Activated CD4-positive, alpha-beta T cell treated with anti-CD3 and anti-CD28 coated beads for 36 hours (primary cell): ENCODE measurements at regions of chr17 and their contacts with region 1.

Region 1: DNA sequence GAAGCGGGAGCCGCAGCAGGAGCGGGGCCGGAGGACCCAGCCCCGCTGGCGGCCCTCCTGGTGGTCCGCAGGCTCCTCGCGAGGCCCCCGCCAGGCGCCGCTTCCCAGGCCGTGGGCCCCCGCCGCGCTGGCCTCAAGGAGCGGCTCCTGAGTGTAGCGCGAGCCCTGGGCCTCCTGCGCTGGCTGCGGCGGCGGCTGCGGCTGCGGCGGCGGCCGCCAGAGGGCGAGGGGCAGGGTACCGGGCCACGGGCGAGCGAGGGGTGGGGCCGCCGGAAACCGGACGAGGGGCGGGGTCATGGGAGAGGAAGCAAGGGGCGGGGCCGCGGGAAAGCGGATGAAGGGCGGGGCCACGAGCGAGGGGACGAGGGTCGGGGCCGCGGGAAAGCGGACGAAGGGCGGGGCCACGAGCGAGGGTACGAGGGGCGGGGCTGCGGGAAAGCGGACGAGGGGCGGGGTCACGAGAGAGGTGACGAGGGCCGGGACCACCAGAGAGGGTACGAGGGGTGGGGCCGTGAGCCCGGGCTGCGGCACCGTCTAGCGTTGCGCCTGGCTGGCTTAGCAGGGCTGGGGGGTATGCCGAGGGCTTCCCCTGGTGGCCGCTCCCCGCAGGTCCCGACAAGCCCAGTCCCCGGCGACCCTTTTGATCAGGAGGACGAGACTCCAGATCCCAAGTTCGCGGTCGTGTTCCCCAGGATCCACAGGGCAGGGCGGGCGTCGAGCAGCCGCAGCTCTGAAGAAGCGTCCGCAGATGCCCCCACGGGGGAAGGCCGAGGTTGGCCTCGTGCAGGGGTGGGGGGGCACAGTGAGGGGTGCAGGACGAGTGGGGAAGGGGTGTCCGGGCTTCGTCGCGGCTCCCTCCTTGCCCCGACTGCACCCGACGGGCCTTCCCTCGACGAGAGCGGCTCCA is 1.7 kb downstream of the MYO15B start:
- DNase-seq: peak; percentile 99
- ATAC-seq: peak; percentile 90
- H3K4me3 Mint-ChIP-seq: peak overlapping the region; percentile 72
- H3K27ac Mint-ChIP-seq: peak overlapping the region; percentile 42
- H3K4me1 Mint-ChIP-seq: no peaks in the 10 kb centered on the region
- H3K27me3 Mint-ChIP-seq: peaks cover 2% of the 10 kb centered on the region

Region 2: DNA sequence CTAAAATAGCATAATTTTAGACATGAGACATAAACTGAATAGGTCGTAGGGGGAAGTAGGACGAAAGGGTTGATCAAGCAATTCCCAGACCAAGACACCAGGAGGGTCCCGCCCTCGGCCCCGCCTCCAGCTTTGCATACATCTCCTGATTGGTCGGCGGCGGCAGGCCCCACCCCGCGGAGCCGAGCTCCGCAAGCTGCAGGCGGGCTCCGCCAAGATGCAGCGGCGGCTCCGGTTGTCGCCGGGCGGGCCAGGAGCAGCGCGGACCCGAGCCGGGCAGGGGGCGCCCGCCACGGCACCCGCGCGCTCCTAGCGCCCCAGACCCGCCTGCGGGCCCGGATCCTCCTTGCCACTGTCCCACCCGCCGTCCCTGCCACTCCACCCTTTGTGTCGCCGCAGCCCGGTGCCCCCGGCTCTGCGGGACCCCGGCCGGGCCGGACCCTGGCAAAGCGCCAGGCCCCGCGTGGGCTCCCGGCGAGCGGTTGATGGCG is 601.8 kb before region 1 on chr17 and contains the start of gene CDR2L:
- CTCF ChIA-PET with region 1: no interaction called
- POLR2A ChIA-PET with region 1: no interaction called
- intact Hi-C with region 1: loop called in 1 of 2 experiments (anchors 1 kb)
- DNase-seq: peak; percentile 95
- ATAC-seq: peak; percentile 98
- H3K4me3 Mint-ChIP-seq: peak within 1 kb of the TSS; percentile 73
- H3K27ac Mint-ChIP-seq: no peak within 1 kb of the TSS
- H3K4me1 Mint-ChIP-seq: peaks cover 9% of the 10 kb centered on the region
- H3K27me3 Mint-ChIP-seq: peaks cover 10% of the 10 kb centered on the region
- total RNA-seq, gene CDR2L: 0.89 to 0.91 TPM

Region 3: DNA sequence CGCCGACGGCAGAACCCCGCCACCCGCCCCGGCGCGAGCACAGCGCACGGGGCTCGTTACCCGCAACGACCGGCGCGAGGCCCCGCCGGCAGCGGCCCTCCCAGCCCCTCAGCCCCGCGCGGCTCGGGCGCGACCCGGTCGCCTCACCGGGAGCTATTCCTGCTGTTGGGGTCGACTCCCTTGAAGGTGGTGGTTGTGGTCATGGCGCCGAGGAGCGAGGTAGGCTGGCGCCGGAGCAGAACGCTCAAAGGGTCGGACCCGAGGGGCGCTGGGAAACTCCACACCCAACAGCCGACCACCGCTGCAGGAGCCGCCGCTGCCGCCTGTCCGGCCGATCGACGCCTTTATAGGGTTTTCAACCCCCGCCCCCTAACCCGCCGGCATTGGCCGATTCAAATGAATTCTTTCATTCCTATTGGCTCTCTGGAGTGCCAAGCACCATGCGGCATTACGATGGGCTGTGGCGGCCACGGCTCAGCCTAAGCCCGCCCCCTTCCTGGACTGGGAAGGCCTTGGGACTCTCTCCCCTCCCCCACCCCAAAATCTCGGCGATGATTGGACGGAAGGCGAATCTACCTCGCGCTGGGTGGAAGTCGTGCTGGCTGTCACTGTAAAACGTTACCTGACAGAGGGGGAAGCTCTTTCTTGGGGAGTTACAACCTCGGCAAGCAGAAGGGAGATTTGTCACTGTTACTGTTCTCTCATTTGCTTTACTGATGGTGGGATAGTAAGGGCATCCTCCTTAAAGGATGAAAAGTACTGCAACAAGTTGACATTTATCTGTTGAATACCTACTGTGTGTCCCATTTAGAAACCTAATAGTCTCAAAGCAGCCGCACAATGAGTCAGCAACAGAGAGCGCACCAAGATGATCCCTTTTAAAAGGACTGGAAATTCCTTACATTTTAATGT is 434.8 kb before region 1 on chr17 and contains the start of gene JPT1:
- CTCF ChIA-PET with region 1: no interaction called
- POLR2A ChIA-PET with region 1: no interaction called
- intact Hi-C with region 1: loop called in 1 of 2 experiments (anchors 1 kb)
- DNase-seq: peak; percentile 99
- ATAC-seq: peak; percentile 98
- H3K4me3 Mint-ChIP-seq: peak within 1 kb of the TSS; percentile 96
- H3K27ac Mint-ChIP-seq: peak within 1 kb of the TSS; percentile 89
- H3K4me1 Mint-ChIP-seq: peaks cover 36% of the 10 kb centered on the region
- H3K27me3 Mint-ChIP-seq: no peaks in the 10 kb centered on the region
- total RNA-seq, gene JPT1: 234 to 238 TPM

Region 4: GRCh38 chr17:75430159-75430974 is 158.9 kb before region 1 on chr17:
- CTCF ChIA-PET with region 1: interaction called, 3 read pairs
- POLR2A ChIA-PET with region 1: no interaction called
- intact Hi-C with region 1: loop called in 1 of 2 experiments (anchors 2 kb)
- DNase-seq: no peak
- ATAC-seq: no peak
- H3K4me3 Mint-ChIP-seq: no peak overlapping the region
- H3K27ac Mint-ChIP-seq: no peak overlapping the region
- H3K4me1 Mint-ChIP-seq: peaks cover 16% of the 10 kb centered on the region
- H3K27me3 Mint-ChIP-seq: peaks cover 5% of the 10 kb centered on the region

Region 5: DNA sequence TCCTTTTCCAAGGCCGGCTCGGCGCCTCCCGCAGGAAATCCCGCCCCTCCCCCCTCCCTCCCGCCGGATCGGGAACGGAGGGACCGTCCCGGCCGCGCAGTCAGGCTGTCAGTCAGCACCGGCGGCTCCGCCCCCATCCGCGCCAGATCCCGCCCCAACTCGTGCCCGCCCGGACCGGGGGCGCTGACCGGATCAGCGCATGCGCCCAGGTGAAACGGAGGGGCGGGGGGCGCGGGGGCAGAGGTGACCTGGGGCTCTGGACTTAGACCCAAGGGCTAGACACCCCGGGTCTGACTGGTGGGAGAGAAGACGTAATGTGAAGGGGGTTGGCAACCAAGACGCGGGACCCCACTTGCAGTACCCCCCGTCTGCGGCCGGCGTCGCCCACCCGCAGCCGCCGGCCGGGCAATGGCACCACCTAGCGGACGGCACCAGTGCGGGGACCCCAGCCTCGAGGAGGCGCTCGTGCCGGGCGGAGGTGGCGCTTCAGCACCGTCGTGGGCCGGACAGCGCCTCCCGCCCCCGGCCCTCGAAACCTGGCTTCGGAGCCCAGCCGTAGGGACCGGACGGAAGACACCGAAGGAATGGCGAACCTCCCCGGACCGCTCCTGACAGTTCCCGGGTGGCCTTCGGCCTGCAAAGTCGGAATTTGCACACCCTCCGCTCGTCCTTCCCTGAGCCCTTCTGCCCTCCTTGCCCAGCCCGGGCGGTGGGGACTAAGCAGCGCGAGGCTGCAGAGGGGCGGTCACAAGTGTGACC is 73.6 kb before region 1 on chr17 and contains the start of gene CASKIN2:
- CTCF ChIA-PET with region 1: interaction called, 4 read pairs
- POLR2A ChIA-PET with region 1: interaction called, 3 read pairs
- intact Hi-C with region 1: loop called in 1 of 2 experiments (anchors 1 kb)
- DNase-seq: peak; percentile 93
- ATAC-seq: peak; percentile 61
- H3K4me3 Mint-ChIP-seq: peak within 1 kb of the TSS; percentile 68
- H3K27ac Mint-ChIP-seq: no peak within 1 kb of the TSS
- H3K4me1 Mint-ChIP-seq: peaks cover 22% of the 10 kb centered on the region
- H3K27me3 Mint-ChIP-seq: peaks cover 3% of the 10 kb centered on the region
- total RNA-seq, gene CASKIN2: 2.9 to 3.0 TPM

Region 6: GRCh38 chr17:75576661-75577060 is 12.6 kb before region 1 on chr17:
- CTCF ChIA-PET with region 1: interaction called, 9 read pairs
- POLR2A ChIA-PET with region 1: no interaction called
- intact Hi-C with region 1: loop called in 1 of 2 experiments (anchors 1 kb)
- DNase-seq: no peak
- ATAC-seq: no peak
- H3K4me3 Mint-ChIP-seq: no peak overlapping the region
- H3K27ac Mint-ChIP-seq: no peak overlapping the region
- H3K4me1 Mint-ChIP-seq: peaks cover 8% of the 10 kb centered on the region
- H3K27me3 Mint-ChIP-seq: peaks cover 2% of the 10 kb centered on the region

Region 7: GRCh38 chr17:75738218-75738802 is 149.0 kb after region 1 on chr17:
- CTCF ChIA-PET with region 1: no interaction called
- POLR2A ChIA-PET with region 1: no interaction called
- intact Hi-C with region 1: no loop called
- DNase-seq: peak; percentile 61
- ATAC-seq: peak; percentile 91
- H3K4me3 Mint-ChIP-seq: no peak overlapping the region
- H3K27ac Mint-ChIP-seq: peak overlapping the region; percentile 55
- H3K4me1 Mint-ChIP-seq: peaks cover 6% of the 10 kb centered on the region
- H3K27me3 Mint-ChIP-seq: no peaks in the 10 kb centered on the region

Region 8: GRCh38 chr17:75779231-75779986 is 190.1 kb after region 1 on chr17:
- CTCF ChIA-PET with region 1: no interaction called
- POLR2A ChIA-PET with region 1: no interaction called
- intact Hi-C with region 1: loop called in 1 of 2 experiments (anchors 1 kb)
- DNase-seq: peak; percentile 96
- ATAC-seq: peak; percentile 69
- H3K4me3 Mint-ChIP-seq: peak overlapping the region; percentile 98
- H3K27ac Mint-ChIP-seq: peak overlapping the region; percentile 99
- H3K4me1 Mint-ChIP-seq: peaks cover 46% of the 10 kb centered on the region
- H3K27me3 Mint-ChIP-seq: peaks cover 1% of the 10 kb centered on the region

Region 9: DNA sequence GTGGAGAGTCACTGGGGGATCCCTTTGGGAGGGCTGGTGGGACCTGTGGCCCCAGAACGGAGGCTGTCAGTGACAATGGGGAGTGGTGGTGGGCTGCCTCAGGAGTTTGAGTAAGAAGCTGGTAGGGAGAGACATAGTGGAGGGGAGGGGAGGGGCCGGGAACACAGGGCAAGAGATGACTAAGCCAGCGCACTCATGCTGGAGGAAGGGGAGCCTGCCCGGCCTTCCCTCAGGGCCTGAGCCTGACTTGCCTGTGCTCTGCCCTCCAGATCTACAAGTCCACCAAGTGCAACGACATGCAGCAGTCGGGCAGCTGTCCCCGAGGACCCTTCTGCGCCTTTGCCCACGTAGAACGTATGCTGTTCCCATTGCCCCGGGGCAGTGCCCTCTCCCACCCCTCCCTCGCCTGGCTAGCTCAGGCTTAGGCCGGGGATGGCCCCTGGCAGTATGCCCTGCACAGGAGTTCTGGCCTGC is 225.7 kb after region 1 on chr17:
- CTCF ChIA-PET with region 1: no interaction called
- POLR2A ChIA-PET with region 1: no interaction called
- intact Hi-C with region 1: no loop called
- DNase-seq: no peak
- ATAC-seq: no peak
- H3K4me3 Mint-ChIP-seq: no peak overlapping the region
- H3K27ac Mint-ChIP-seq: no peak overlapping the region
- H3K4me1 Mint-ChIP-seq: no peaks in the 10 kb centered on the region
- H3K27me3 Mint-ChIP-seq: no peaks in the 10 kb centered on the region